ENCODE measurements at regions of chr3 and their contacts with region 1.

Region 1: GRCh38 chr3:191051037-191051436 is 148.0 kb upstream of the OSTN start:
- DNase-seq: no peak
- ATAC-seq: peak; percentile 76
- H3K4me3 ChIP-seq: no peak overlapping the region
- H3K27ac ChIP-seq: no peak overlapping the region
- H3K4me1 ChIP-seq: no peaks in the 10 kb centered on the region
- H3K27me3 ChIP-seq: no peaks in the 10 kb centered on the region
- CTCF ChIP-seq: peak in 2 of 3 experiments; percentile 26 to 49; a peak in 3 of 6 replicates
- EP300 ChIP-seq: no peak
- POLR2A ChIP-seq: no peak
- RAD21 ChIP-seq: peak; percentile 66

Region 2: DNA sequence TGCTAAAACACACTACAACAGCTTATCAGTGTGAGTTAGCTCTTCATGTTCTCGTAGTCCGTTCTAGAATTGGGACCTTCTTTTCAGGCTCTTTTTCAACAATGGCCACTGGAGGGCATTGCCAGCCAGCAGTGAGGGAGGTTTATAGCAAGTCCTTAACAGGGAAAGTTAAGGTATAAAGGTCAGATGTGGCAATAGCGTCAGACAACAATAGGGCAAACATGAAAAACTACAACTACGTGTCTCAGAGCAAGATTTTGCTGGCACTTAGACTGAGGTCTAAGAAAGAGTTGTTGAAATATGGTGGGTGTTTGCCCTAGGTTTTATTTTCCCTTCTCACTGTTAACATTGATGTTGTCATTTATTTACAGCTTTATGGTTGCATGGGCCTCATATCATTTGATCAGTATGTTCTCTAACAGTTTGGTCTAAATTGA is 349.9 kb before region 1 on chr3:
- CTCF ChIA-PET with region 1: interaction called, 13 read pairs
- POLR2A ChIA-PET with region 1: no interaction called
- RAD21 ChIA-PET with region 1: interaction called, 5 read pairs
- SMC1A ChIA-PET with region 1: interaction called, 4 read pairs
- in situ Hi-C with region 1: no loop called
- intact Hi-C with region 1: loop called (anchors 5 kb)
- DNase-seq: no peak
- ATAC-seq: peak; percentile 73
- H3K4me3 ChIP-seq: no peak overlapping the region
- H3K27ac ChIP-seq: no peak overlapping the region
- H3K4me1 ChIP-seq: no peaks in the 10 kb centered on the region
- H3K27me3 ChIP-seq: no peaks in the 10 kb centered on the region
- CTCF ChIP-seq: peak; percentile 45 to 47 (median 47)
- EP300 ChIP-seq: no peak
- POLR2A ChIP-seq: no peak
- RAD21 ChIP-seq: peak; percentile 49

Region 3: GRCh38 chr3:190811775-190812480 is 239.1 kb before region 1 on chr3:
- CTCF ChIA-PET with region 1: interaction called, 65 read pairs
- POLR2A ChIA-PET with region 1: no interaction called
- RAD21 ChIA-PET with region 1: interaction called, 11 read pairs
- SMC1A ChIA-PET with region 1: interaction called, 5 read pairs
- in situ Hi-C with region 1: loop called (anchors 5 kb)
- intact Hi-C with region 1: loop called (anchors 1 kb)
- DNase-seq: no peak
- ATAC-seq: peak; percentile 88
- H3K4me3 ChIP-seq: no peak overlapping the region
- H3K27ac ChIP-seq: no peak overlapping the region
- H3K4me1 ChIP-seq: no peaks in the 10 kb centered on the region
- H3K27me3 ChIP-seq: no peaks in the 10 kb centered on the region
- CTCF ChIP-seq: peak; percentile 62 to 69 (median 68)
- EP300 ChIP-seq: no peak
- POLR2A ChIP-seq: no peak
- RAD21 ChIP-seq: peak; percentile 57

Region 4: DNA sequence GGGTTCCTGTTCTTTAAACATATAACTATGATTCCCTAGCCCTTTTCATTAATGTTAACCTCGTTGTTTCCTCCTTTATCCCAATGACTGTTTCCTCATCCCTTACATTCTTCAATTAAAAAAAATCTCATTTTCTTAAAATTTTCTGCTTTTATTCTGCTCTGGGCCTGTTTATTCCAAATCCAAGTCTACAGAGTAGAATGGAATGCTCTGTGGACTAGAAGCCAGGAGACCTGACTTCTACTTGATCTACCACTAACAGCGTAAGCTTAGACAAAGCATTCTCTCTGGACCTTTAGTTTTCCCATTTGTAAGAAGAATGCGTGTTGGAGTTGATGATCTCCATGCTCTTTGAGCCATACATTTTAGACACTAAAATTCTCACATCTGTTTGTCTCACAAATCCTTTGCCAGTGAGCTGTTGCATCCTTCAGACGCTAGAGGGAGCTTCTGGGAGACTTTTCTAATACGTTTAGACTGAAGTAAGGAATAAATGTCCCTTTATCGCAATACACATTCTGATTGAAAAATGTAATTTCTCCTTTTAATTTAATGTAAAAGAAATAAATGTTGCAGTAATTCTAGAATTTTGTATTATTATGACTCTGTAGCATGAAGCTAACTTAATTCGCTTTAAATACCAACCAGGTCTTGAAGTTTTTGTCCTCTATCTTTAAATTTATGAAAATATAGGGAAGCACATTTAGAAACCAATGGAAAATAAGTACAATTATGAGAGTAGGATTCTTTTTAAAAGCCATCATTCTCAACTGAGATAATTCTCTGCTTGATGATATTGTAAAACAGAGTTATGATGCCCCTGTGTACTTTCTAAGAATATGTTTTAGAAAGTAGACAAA is 166.8 kb before region 1 on chr3:
- CTCF ChIA-PET with region 1: interaction called, 179 read pairs
- POLR2A ChIA-PET with region 1: no interaction called
- RAD21 ChIA-PET with region 1: interaction called, 68 read pairs
- SMC1A ChIA-PET with region 1: interaction called, 94 read pairs
- in situ Hi-C with region 1: loop called (anchors 10 kb)
- intact Hi-C with region 1: loop called (anchors 1 kb)
- DNase-seq: no peak
- ATAC-seq: peak; percentile 73
- H3K4me3 ChIP-seq: no peak overlapping the region
- H3K27ac ChIP-seq: no peak overlapping the region
- H3K4me1 ChIP-seq: no peaks in the 10 kb centered on the region
- H3K27me3 ChIP-seq: no peaks in the 10 kb centered on the region
- CTCF ChIP-seq: peak; percentile 71 to 90 (median 84)
- EP300 ChIP-seq: no peak
- POLR2A ChIP-seq: no peak
- RAD21 ChIP-seq: peak; percentile 68